ENCODE measurements at regions of chr2 and their contacts with region 1.

Region 1: GRCh38 chr2:12320991-12321641 is 395.6 kb upstream of the TRIB2 start:
- DNase-seq: peak; percentile 97
- H3K4me3 ChIP-seq: no peak overlapping the region
- CTCF ChIP-seq: peak; percentile 9

Region 2: GRCh38 chr2:11477994-11478393 is 843.1 kb before region 1 on chr2:
- in situ Hi-C with region 1: no loop called
- DNase-seq: peak; percentile 81
- H3K4me3 ChIP-seq: no peak overlapping the region
- CTCF ChIP-seq: peak; percentile 85

Region 3: DNA sequence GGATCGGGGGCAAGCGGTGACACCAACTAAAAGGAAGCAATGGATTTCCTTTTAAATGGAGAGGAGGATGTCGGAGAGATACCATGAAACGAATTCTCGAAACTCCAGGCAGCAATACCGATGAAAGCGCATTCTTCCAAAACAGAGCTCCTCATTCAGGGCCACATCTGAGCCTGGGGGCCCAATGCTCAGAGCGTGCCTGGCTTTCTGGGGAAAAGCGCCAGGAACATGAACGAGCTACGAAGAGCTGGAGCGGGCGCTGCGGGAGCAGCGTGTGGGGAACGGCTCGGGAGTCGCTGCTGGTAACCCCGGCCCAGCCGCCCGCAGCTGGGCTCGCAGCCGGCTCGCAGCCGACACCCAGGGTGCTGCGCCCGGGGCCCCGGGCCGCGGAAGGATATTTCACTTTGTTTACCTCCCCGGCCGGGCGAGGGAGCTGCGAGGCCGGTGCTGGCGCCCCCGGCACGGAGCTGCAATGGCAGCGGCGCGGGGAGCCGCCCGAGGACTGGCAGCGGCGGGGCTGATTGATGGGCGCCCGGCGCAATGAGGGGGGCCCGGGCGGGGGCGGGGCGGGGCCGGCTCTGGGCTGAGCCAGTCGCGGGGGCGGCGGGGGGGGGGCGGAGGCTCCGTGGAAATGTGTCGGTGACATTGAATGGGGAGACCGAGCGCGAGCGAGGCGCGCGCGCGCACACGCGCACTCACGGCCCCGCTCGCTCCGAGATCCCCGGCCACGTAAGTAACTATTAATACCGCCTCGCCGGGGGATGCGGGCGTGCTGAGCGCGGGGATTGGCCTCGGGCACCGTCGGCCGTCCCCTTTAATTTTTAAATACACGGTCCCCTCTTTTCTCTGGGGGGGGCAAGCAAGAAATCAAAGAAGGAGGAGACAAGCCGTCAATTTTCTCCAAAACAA is 395.4 kb after region 1 on chr2 and contains the start of gene TRIB2:
- in situ Hi-C with region 1: loop called (anchors 25 kb)
- DNase-seq: peak; percentile 94
- H3K4me3 ChIP-seq: peak within 1 kb of the TSS; percentile 96
- CTCF ChIP-seq: no peak

Region 4: DNA sequence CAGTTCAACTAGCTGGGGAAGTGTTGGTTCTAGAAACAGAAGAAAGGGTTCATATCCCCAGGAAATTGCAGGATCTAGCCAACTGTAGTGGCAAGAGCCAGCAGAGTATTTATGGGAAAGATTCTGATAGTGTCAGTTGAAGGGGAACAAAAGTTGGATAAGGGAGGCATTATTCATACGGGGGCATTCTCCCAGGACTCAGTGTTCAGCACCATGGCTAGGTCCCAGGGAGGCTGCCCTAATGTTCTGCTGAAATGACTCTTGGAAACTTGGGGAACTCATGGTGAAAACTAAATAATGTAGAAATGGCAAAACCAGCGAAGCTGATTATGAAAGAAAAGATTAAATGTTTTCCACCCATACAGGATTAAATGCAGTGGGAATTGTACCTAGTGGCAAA is 939.3 kb after region 1 on chr2:
- in situ Hi-C with region 1: no loop called
- DNase-seq: peak; percentile 1
- H3K4me3 ChIP-seq: no peak overlapping the region
- CTCF ChIP-seq: no peak

Measured in astrocyte of the spinal cord (primary cell).